ENCODE measurements at regions of chr9 and their contacts with region 1.

Region 1: DNA sequence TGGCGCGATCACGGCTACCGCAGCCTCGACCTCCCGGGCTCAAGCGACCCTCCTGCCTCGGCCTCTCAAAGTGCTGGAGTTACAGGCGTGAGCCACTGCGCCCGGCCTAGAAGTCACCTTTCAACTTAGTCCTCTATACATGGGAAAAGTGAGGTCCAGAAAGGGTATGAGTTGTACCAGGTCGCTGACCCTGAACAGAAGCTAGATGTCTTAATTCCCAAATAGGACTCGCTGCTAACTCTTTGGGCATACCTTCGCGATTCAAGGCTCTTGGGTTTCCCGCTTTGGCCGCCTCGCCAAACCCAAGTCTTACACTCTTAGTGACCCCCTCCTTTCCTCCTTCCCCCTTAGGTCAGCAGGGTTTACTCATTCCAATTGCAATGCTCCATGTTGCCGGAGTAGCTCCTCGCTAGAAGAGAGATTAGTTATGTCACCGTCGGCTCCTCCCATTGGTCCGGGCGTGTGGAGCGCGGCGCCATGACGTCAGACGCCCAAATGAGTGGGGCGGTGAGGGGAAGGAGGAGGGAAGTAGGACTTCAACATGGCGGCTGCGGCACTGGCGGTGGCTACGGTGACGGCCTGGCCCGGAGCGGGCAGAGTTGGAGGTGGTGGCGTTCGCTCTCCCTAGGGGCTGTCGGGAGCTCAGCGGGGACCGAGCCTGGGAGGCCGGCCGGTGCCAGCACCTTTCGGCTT is at the start of gene UBAP1:
- DNase-seq: peak; percentile 95
- H3K4me3 Mint-ChIP-seq: peak within 1 kb of the TSS; percentile 92
- H3K27ac Mint-ChIP-seq: peak within 1 kb of the TSS; percentile 94
- H3K4me1 Mint-ChIP-seq: peaks cover 5% of the 10 kb centered on the region
- H3K27me3 Mint-ChIP-seq: no peaks in the 10 kb centered on the region
- total RNA-seq, gene UBAP1: 30.0 and 33.4 TPM in 2 replicates

Region 2: DNA sequence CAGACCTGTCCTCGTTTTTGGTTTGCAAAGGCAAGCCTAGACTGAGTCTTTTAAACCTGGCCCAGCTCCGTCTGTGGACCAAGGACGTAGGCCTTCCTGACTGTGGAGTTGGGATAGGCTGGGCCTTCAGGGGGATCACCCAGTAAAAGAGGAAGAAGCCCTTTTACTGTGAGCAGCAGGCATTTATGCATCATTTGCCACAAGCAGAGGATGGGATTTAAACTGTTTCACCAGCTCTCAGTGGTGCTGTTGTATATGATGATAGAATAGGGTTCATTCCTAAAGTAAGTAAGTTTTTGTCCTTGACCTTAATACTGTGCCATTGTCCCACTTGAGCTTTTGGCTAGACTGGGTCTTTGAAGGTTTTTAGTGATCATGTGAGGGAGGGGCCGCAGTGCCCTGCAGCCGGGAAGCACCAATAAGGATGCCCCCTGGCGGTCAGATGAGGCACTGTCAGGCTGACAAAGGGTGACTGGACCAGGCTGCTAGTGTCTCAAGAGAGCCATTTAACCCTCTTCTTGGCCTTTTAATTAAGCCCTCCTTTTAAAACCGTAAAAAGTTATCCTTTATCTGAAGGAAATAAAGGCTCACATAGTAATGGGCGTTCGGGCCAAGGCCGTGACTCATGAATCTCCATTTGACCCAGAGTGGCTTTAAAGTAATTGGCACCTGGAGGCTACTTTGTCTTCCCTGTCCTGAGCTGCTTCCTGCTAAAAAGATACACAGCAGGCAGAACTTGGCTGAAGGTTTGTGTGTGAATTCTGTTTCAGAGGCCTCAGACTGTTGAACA is 74.2 kb after region 1 on chr9:
- intact Hi-C with region 1: loop called (anchors 2 kb)
- DNase-seq: peak; percentile 50
- H3K4me3 Mint-ChIP-seq: no peak overlapping the region
- H3K27ac Mint-ChIP-seq: no peak overlapping the region
- H3K4me1 Mint-ChIP-seq: peaks cover 15% of the 10 kb centered on the region
- H3K27me3 Mint-ChIP-seq: no peaks in the 10 kb centered on the region

Region 3: GRCh38 chr9:34376596-34377403 is 198.1 kb after region 1 on chr9 and contains the start of gene MYORG:
- intact Hi-C with region 1: loop called (anchors 2 kb)
- DNase-seq: peak; percentile 97
- H3K4me3 Mint-ChIP-seq: peak within 1 kb of the TSS; percentile 88
- H3K27ac Mint-ChIP-seq: peak within 1 kb of the TSS; percentile 32
- H3K4me1 Mint-ChIP-seq: peaks cover 45% of the 10 kb centered on the region
- H3K27me3 Mint-ChIP-seq: peaks cover 13% of the 10 kb centered on the region
- total RNA-seq, gene MYORG: 1.0 and 1.9 TPM in 2 replicates

Measured in activated T-helper 1 cell treated with anti-CD3 and anti-CD28 coated beads, Interleukin-12 subunit alpha, Interleukin-12 subunit beta, Interleukin-2, Interleukin-4 antibody, amounts not matched to agents 30 ng/mL and 10 ng/mL and 1 ng/mL, durations not matched to agents 14 hours and 24 hours and 36 hours (primary cell).